A673 (cell line): ENCODE measurements at regions of chr11 and their contacts with region 1.

Region 1: GRCh38 chr11:111938687-111939160 is 1.6 kb downstream of the DIXDC1 start:
- DNase-seq: peak; percentile 35
- H3K4me3 ChIP-seq: peak overlapping the region; percentile 58
- H3K27ac ChIP-seq: no peak overlapping the region
- H3K4me1 ChIP-seq: peaks cover 44% of the 10 kb centered on the region
- H3K27me3 ChIP-seq: no peaks in the 10 kb centered on the region
- CTCF ChIP-seq: no peak

Region 2: GRCh38 chr11:111982019-111982464 is 43.3 kb after region 1 on chr11:
- CTCF ChIA-PET with region 1: no interaction called
- POLR2A ChIA-PET with region 1: no interaction called
- intact Hi-C with region 1: loop called (anchors 5 kb)
- DNase-seq: peak; percentile 26
- H3K4me3 ChIP-seq: no peak overlapping the region
- H3K27ac ChIP-seq: no peak overlapping the region
- H3K4me1 ChIP-seq: peaks cover 23% of the 10 kb centered on the region
- H3K27me3 ChIP-seq: no peaks in the 10 kb centered on the region
- CTCF ChIP-seq: peak; percentile 62

Region 3: GRCh38 chr11:111996129-111996528 is 57.4 kb after region 1 on chr11:
- CTCF ChIA-PET with region 1: interaction called, 5 read pairs
- POLR2A ChIA-PET with region 1: no interaction called
- intact Hi-C with region 1: loop called (anchors 5 kb)
- DNase-seq: no peak
- H3K4me3 ChIP-seq: no peak overlapping the region
- H3K27ac ChIP-seq: no peak overlapping the region
- H3K4me1 ChIP-seq: peaks cover 32% of the 10 kb centered on the region
- H3K27me3 ChIP-seq: no peaks in the 10 kb centered on the region
- CTCF ChIP-seq: no peak

Region 4: DNA sequence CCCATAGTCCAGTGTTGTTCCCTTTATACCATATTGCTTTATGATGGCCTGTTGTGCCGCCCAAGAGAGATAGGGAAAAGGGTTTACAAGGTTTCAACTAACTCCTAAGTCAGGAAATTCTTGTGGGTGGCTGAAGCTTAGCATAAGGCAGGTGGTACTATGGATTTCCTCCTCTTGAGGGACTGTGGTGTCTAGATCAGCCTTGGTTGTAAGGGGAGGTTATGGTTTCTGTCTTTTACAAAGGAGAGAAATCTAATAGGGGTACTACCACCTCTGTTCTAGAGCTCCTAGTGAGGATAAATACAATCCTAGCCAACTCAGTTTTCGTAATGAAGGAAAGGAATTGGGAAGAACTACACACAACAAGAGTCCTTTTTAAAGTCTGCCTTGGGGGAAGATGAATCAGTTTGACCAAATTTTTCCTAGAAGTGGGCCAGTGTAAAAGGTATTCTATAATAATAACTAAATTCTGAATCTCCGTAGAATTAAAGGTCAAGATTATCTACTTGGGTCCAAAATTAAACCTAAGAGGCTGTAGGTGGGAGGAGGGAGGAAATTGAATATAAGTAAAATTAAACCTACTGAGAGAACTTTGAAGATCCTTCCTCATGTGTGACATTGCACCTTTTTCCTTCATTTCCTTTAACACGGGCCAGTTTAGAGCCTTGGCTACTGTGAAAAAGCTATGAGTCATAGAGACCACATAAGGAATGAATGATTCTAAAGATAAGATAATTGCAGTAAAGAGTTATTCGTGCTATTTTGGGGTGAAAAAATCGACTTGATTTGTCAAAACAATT is 103.6 kb after region 1 on chr11:
- CTCF ChIA-PET with region 1: no interaction called
- POLR2A ChIA-PET with region 1: interaction called, 13 read pairs
- intact Hi-C with region 1: no loop called
- DNase-seq: peak; percentile 33
- H3K4me3 ChIP-seq: no peak overlapping the region
- H3K27ac ChIP-seq: peak overlapping the region; percentile 4
- H3K4me1 ChIP-seq: peaks cover 3% of the 10 kb centered on the region
- H3K27me3 ChIP-seq: no peaks in the 10 kb centered on the region
- CTCF ChIP-seq: no peak

Region 5: GRCh38 chr11:112086422-112087191 is 147.9 kb after region 1 on chr11 and contains the starts of genes SDHD and TIMM8B:
- CTCF ChIA-PET with region 1: no interaction called
- POLR2A ChIA-PET with region 1: no interaction called
- intact Hi-C with region 1: loop called (anchors 10 kb)
- DNase-seq: peak; percentile 99
- H3K4me3 ChIP-seq: peak within 1 kb of the TSS; percentile 78
- H3K27ac ChIP-seq: peak within 1 kb of the TSS; percentile 89
- H3K4me1 ChIP-seq: peaks cover 18% of the 10 kb centered on the region
- H3K27me3 ChIP-seq: no peaks in the 10 kb centered on the region
- CTCF ChIP-seq: peak; percentile 31; the same call in 1 of the 2 replicates
- total RNA-seq, gene SDHD: 119 and 135 TPM in 2 replicates
- total RNA-seq, gene TIMM8B: 97.7 and 99.6 TPM in 2 replicates